Activated CD4-positive, alpha-beta T cell treated with anti-CD3 and anti-CD28 coated beads, Interleukin-2, amount 10 ng/mL, durations not matched to agents 24 days and 14 days (primary cell): ENCODE measurements at regions of chr15 and their contacts with region 1.

Region 1: GRCh38 chr15:59372352-59373211 is at the start of gene MYO1E:
- DNase-seq: peak; percentile 84
- H3K4me3 Mint-ChIP-seq: peak within 1 kb of the TSS; percentile 98
- H3K27ac Mint-ChIP-seq: peak within 1 kb of the TSS; percentile 80
- H3K4me1 Mint-ChIP-seq: peaks cover 33% of the 10 kb centered on the region
- H3K27me3 Mint-ChIP-seq: peaks cover 37% of the 10 kb centered on the region
- total RNA-seq, gene MYO1E: 34.5 and 45.1 TPM in 2 replicates

Region 2: DNA sequence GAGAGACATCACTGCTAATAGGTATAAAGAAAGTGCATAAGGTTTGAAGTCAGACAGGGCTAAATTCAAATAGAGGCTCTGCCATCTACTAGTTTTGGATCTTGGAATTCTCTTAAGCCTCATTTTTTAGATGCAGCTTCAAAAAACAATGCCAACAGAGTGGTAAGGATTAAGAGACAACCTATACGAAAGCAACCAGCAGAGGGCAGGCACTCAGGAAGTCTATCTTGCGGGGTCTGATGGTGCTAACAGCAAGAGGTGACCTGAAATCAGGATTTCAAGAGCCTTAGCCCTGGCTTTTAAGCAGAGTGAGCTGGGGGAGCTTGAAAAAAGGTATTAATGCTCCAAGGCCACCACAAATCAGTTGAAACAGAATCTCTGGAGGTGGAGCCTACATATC is 125.2 kb before region 1 on chr15:
- intact Hi-C with region 1: loop called (anchors 5 kb)
- DNase-seq: peak; percentile 85
- H3K4me3 Mint-ChIP-seq: no peak overlapping the region
- H3K27ac Mint-ChIP-seq: no peak overlapping the region
- H3K4me1 Mint-ChIP-seq: peaks cover 27% of the 10 kb centered on the region
- H3K27me3 Mint-ChIP-seq: no peaks in the 10 kb centered on the region